Heart right ventricle (tissue), 16 donors: ENCODE measurements at regions of chr21 and their contacts with region 1.

Region 1: DNA sequence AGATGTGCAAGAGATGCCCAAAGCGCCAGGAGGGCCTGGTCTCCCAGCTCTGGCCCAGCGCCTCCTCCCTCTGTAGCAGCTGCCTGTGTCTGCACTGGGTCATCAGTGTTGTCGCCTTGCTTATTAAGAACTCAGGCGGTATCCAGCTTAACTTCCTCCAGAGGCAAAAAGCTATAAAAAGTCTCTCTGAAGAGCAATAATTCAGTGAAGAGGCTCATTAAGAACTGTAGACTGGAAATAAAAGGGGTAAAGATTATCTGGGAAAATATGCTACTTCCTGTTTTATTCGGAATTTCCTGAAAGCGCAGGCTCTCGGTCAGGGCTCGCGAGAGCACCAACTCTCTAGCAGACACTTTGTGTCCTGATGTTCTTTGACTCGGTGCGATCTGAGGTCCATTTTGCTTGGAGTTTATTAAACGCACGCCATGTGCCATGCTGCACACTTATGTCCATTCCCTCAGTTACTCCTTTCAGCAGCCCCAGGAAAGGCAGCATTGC is 70.4 kb downstream of the MRPS6 start:
- DNase-seq: no peak
- ATAC-seq: peak in 2 of 8 donors; percentile 12 to 25
- H3K4me3 ChIP-seq: no peak overlapping the region
- H3K27ac ChIP-seq: no peak overlapping the region
- H3K4me1 ChIP-seq: peaks cover 0 to 20% (median 17%) of the 10 kb centered on the region in 9 donors
- H3K27me3 ChIP-seq: no peaks in the 10 kb centered on the region
- CTCF ChIP-seq: no peak

Region 2: GRCh38 chr21:34179204-34179935 is 35.6 kb after region 1 on chr21:
- intact Hi-C with region 1: loop called in 1 of 10 experiments (anchors 5 kb)
- DNase-seq: no peak
- ATAC-seq: no peak
- H3K4me3 ChIP-seq: no peak overlapping the region
- H3K27ac ChIP-seq: no peak overlapping the region
- H3K4me1 ChIP-seq: peaks cover 0 to 11% (median 0%) of the 10 kb centered on the region in 9 donors
- H3K27me3 ChIP-seq: no peaks in the 10 kb centered on the region
- CTCF ChIP-seq: no peak

Region 3: GRCh38 chr21:34190576-34191321 is 47.0 kb after region 1 on chr21:
- intact Hi-C with region 1: no loop called
- DNase-seq: no peak
- ATAC-seq: no peak
- H3K4me3 ChIP-seq: no peak overlapping the region
- H3K27ac ChIP-seq: no peak overlapping the region
- H3K4me1 ChIP-seq: peaks cover 0 to 6% (median 0%) of the 10 kb centered on the region in 9 donors
- H3K27me3 ChIP-seq: no peaks in the 10 kb centered on the region
- CTCF ChIP-seq: no peak